Activated CD4-positive, alpha-beta T cell treated with anti-CD3 and anti-CD28 coated beads, Interleukin-2, amount 10 ng/mL, durations not matched to agents 24 days and 14 days (primary cell): ENCODE measurements at regions of chr14 and their contacts with region 1.

Region 1: DNA sequence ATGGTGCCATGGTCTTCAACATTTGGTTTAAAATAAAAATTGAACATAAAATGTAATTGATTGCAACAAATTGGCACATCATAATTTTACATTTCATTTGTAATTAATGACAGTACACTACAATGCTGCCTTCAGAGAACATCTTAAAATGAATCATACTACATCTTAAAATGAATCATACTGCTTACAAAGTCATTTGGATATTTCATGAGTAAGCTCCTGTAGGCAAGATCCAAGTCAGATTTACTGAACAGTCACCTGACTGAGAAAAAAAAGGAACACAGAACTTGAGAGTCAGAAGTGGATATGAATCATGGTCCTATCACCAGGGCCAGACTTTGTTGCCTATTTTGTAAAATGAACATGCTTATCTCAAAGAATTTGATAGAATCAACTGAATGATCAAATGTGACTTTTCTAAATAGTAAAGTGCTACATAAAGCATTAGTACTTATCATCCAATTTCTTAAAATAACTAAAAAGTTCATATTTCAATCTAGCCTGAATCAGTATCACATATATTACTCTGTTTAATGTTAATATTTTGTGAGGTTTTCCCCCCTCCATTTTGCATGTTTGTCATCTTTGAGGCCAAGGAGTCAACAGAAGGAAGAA is 32.7 kb upstream of the FBLN5 start:
- DNase-seq: no peak
- H3K4me3 Mint-ChIP-seq: no peak overlapping the region
- H3K27ac Mint-ChIP-seq: no peak overlapping the region
- H3K4me1 Mint-ChIP-seq: peaks cover 23% of the 10 kb centered on the region
- H3K27me3 Mint-ChIP-seq: no peaks in the 10 kb centered on the region

Region 2: GRCh38 chr14:91963465-91963864 is 16.8 kb before region 1 on chr14:
- intact Hi-C with region 1: loop called (anchors 1 kb)
- DNase-seq: no peak
- H3K4me3 Mint-ChIP-seq: no peak overlapping the region
- H3K27ac Mint-ChIP-seq: no peak overlapping the region
- H3K4me1 Mint-ChIP-seq: peaks cover 8% of the 10 kb centered on the region
- H3K27me3 Mint-ChIP-seq: no peaks in the 10 kb centered on the region

Region 3: DNA sequence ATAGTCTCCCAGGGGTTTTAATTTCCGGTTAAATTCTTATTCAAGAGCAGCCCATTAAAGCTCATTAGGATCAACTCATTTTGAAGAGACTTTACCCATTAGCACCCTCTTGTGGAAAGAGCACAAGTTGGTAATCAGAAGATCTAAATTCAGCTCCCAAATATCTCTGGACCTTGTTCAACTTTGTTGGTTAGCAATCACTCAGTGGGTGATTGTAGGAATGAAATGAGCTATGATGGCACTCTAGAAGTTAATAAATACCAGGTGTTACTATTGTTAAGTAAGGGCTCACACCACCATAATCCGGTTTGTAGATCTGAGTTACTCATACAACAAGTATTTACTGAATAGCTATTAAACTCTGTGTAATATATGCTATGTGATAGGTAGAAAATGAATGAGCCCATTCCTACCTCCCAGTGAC is 16.7 kb after region 1 on chr14:
- intact Hi-C with region 1: no loop called
- DNase-seq: peak; percentile 64
- H3K4me3 Mint-ChIP-seq: no peak overlapping the region
- H3K27ac Mint-ChIP-seq: no peak overlapping the region
- H3K4me1 Mint-ChIP-seq: peaks cover 24% of the 10 kb centered on the region
- H3K27me3 Mint-ChIP-seq: no peaks in the 10 kb centered on the region